ENCODE measurements at regions of chr10 and their contacts with region 1.

Region 1: GRCh38 chr10:61903221-61903927 is 1.9 kb downstream of the ARID5B start:
- DNase-seq: peak; percentile 92
- H3K4me3 Mint-ChIP-seq: peak overlapping the region; percentile 92
- H3K27ac Mint-ChIP-seq: peak overlapping the region; percentile 95
- H3K4me1 Mint-ChIP-seq: peaks cover 36% of the 10 kb centered on the region
- H3K27me3 Mint-ChIP-seq: no peaks in the 10 kb centered on the region

Region 2: GRCh38 chr10:61628875-61629513 is 274.4 kb before region 1 on chr10:
- intact Hi-C with region 1: no loop called
- DNase-seq: no peak
- H3K4me3 Mint-ChIP-seq: no peak overlapping the region
- H3K27ac Mint-ChIP-seq: no peak overlapping the region
- H3K4me1 Mint-ChIP-seq: no peaks in the 10 kb centered on the region
- H3K27me3 Mint-ChIP-seq: peaks cover 2% of the 10 kb centered on the region

Region 3: GRCh38 chr10:61750929-61751471 is 152.4 kb before region 1 on chr10:
- intact Hi-C with region 1: loop called (anchors 5 kb)
- DNase-seq: peak; percentile 89
- H3K4me3 Mint-ChIP-seq: peak overlapping the region; percentile 50
- H3K27ac Mint-ChIP-seq: peak overlapping the region; percentile 30
- H3K4me1 Mint-ChIP-seq: peaks cover 25% of the 10 kb centered on the region
- H3K27me3 Mint-ChIP-seq: peaks cover 2% of the 10 kb centered on the region

Region 4: DNA sequence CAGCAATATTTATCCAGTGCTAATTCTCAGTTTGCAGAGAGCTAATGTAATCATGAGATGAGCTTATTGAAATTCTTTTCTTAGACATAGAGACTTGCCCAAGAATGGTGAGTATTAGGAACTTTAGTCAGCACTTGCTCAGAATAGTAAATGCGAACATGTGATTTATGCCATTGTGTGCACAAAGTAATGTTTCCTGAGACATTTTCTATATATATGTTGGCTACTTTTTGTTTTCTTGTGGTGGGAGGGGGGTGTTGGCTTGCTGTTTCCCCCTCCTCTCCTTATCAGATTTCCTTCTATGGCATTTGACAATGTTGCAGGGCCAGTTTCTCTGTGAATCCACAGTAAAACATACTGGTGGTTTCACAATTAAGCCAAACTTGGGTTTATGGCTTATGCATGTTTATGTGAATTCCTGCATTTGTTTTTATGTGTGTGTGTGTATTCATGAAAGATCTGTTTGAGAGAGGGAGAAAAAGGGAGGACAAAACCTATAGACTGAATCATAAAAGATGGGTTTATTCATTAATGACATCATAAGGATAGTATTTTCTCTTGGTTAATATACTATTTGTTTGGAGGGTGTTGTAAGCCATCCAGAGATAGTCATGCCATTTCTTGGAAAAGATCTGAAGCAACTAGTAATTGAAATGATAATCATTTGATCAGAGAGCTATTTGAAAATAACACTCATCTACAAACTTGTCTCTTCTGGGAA is 34.4 kb after region 1 on chr10:
- intact Hi-C with region 1: loop called (anchors 1 kb)
- DNase-seq: peak; percentile 70
- H3K4me3 Mint-ChIP-seq: peak overlapping the region; percentile 55
- H3K27ac Mint-ChIP-seq: peak overlapping the region; percentile 92
- H3K4me1 Mint-ChIP-seq: peaks cover 75% of the 10 kb centered on the region
- H3K27me3 Mint-ChIP-seq: no peaks in the 10 kb centered on the region

Region 5: DNA sequence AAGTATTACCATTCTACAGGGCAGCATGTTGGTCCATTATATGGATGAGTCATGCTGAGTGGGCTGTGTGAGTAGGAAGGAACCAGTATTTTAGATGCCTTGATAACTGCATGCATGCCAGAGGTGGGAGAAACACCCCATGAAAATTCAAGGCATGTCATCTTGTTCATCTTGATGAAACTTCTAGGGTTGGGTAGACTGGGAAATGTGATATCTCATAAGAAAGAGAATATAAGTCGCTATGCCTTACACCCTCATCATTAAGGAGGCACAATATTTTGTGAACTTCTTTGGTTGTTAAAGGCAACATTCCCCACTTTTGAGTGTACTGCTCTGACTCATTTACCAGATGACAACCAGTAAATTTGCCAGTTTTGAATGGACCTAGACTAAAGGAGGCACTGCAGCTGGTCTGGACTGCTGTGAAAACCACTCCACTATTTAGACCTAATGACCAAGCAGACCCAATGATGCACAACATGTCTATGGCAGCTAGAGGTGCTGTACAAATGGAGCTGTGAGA is 518.8 kb after region 1 on chr10:
- intact Hi-C with region 1: loop called (anchors 10 kb)
- DNase-seq: no peak
- H3K4me3 Mint-ChIP-seq: no peak overlapping the region
- H3K27ac Mint-ChIP-seq: no peak overlapping the region
- H3K4me1 Mint-ChIP-seq: peaks cover 11% of the 10 kb centered on the region
- H3K27me3 Mint-ChIP-seq: peaks cover 10% of the 10 kb centered on the region

Region 6: GRCh38 chr10:62858364-62858763 is 955.0 kb after region 1 on chr10:
- intact Hi-C with region 1: loop called (anchors 5 kb)
- DNase-seq: no peak
- H3K4me3 Mint-ChIP-seq: no peak overlapping the region
- H3K27ac Mint-ChIP-seq: no peak overlapping the region
- H3K4me1 Mint-ChIP-seq: peaks cover 60% of the 10 kb centered on the region
- H3K27me3 Mint-ChIP-seq: peaks cover 4% of the 10 kb centered on the region